ENCODE measurements at regions of chr10 and their contacts with region 1.

Region 1: GRCh38 chr10:114103284-114103683 is 59.6 kb downstream of the ADRB1 start:
- DNase-seq: peak in 4 of 5 donors; percentile 26 to 41 (median 33)
- H3K4me3 ChIP-seq: no peak overlapping the region
- H3K4me3 Mint-ChIP-seq: peak overlapping the region in 2 of 8 donors; percentile 38 to 48
- H3K27ac ChIP-seq: no peak overlapping the region
- H3K27ac Mint-ChIP-seq: no peak overlapping the region
- H3K4me1 ChIP-seq: peaks cover 15% of the 10 kb centered on the region
- H3K4me1 Mint-ChIP-seq: peaks cover 20 to 31% (median 23%) of the 10 kb centered on the region in 4 donors
- H3K27me3 ChIP-seq: peaks cover 12% of the 10 kb centered on the region
- H3K27me3 Mint-ChIP-seq: peaks cover 19 to 27% of the 10 kb centered on the region in 2 donors

Region 2: GRCh38 chr10:112663234-112664125 is 1439.8 kb before region 1 on chr10:
- CTCF ChIA-PET with region 1: no interaction called
- POLR2A ChIA-PET with region 1: no interaction called
- intact Hi-C with region 1: no loop called
- DNase-seq: no peak
- H3K4me3 ChIP-seq: no peak overlapping the region
- H3K4me3 Mint-ChIP-seq: no peak overlapping the region
- H3K27ac ChIP-seq: no peak overlapping the region
- H3K27ac Mint-ChIP-seq: no peak overlapping the region
- H3K4me1 ChIP-seq: no peaks in the 10 kb centered on the region
- H3K4me1 Mint-ChIP-seq: peaks cover 0 to 1% (median 0%) of the 10 kb centered on the region in 4 donors
- H3K27me3 ChIP-seq: no peaks in the 10 kb centered on the region
- H3K27me3 Mint-ChIP-seq: no peaks in the 10 kb centered on the region

Region 3: DNA sequence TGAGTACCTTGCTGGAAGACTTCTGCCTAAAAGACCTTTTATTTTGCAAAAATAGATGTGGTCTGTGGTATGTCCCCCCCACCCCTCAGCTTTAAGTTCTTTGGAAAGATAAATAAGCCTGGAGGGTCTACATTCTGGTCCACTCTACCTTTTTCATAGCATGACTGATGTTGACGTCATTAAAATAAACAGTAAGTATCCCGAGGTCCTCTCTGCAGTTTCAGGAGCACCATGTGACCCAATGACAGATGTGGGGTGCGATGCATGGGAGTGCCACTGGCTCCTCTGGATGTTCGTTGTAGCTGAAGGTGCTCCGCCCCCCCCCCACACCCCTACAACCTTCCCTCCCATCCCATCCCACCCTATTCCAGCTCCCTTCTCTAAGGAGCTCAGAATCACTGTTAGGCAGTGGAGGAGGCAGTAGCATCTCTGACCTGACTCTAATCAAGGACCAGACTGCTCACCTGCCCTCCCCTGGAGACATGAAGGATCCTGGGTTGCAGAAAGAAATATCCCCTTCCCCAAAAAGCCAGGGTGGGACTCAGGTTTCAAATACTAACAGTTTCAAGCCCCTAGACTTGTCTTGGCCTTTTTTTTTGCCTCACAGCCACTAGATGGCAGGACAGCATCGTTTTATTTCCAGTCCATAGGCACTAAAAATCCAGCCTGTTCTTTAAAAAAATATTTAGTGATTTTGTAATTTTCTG is 398.5 kb before region 1 on chr10:
- CTCF ChIA-PET with region 1: interaction called, 17 read pairs
- POLR2A ChIA-PET with region 1: no interaction called
- intact Hi-C with region 1: loop called (anchors 1 kb)
- DNase-seq: peak in 2 of 5 donors; percentile 13
- H3K4me3 ChIP-seq: no peak overlapping the region
- H3K4me3 Mint-ChIP-seq: no peak overlapping the region
- H3K27ac ChIP-seq: no peak overlapping the region
- H3K27ac Mint-ChIP-seq: no peak overlapping the region
- H3K4me1 ChIP-seq: peaks cover 24% of the 10 kb centered on the region
- H3K4me1 Mint-ChIP-seq: peaks cover 24 to 46% (median 28%) of the 10 kb centered on the region in 4 donors
- H3K27me3 ChIP-seq: no peaks in the 10 kb centered on the region
- H3K27me3 Mint-ChIP-seq: no peaks in the 10 kb centered on the region

Region 4: GRCh38 chr10:113802997-113803396 is 300.3 kb before region 1 on chr10:
- CTCF ChIA-PET with region 1: interaction called, 129 read pairs
- POLR2A ChIA-PET with region 1: no interaction called
- intact Hi-C with region 1: no loop called
- DNase-seq: no peak
- H3K4me3 ChIP-seq: no peak overlapping the region
- H3K4me3 Mint-ChIP-seq: no peak overlapping the region
- H3K27ac ChIP-seq: no peak overlapping the region
- H3K27ac Mint-ChIP-seq: no peak overlapping the region
- H3K4me1 ChIP-seq: no peaks in the 10 kb centered on the region
- H3K4me1 Mint-ChIP-seq: peaks cover 0 to 3% (median 1%) of the 10 kb centered on the region in 4 donors
- H3K27me3 ChIP-seq: peaks cover 6% of the 10 kb centered on the region
- H3K27me3 Mint-ChIP-seq: peaks cover 6 to 15% of the 10 kb centered on the region in 2 donors

Region 5: DNA sequence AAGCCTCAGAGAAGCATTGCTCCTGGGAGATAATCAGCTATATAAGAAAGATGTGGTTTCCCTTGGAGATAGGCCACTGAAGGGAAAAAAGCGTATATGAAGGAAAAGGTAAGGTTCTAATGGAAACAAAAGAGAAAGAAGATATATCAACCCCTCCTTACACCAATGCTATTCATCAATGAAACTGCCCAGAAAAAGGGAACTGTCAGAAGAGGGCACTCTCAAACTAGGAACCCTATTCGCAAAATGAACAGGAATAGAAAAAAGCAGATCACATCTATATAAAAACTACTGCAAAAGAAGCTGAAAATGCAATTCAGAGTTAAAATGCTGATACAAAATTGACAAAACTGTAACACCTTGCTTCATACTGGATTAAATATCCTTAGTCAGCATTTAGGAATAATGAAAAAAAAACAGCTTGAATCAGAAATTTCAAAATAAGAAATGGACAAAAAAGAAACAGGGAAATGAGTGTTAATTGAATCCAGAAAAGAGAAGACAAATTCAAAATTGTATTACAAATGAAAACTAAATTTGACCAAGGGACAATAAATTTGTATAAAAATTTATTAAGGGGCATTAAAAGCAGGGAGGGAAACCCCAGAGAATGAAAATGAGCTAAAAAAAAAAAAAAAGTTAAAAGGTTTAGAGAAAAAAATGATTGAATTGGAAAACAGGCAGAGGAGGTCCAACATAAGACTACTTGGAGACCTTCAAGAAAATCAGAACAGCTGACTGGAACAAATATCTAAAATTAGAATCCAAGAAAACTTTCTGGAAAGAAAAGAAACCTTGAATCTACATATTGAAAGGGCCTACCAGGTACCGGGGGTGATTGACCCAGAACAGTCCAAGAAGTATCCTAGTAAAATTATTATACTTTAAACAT is 230.9 kb before region 1 on chr10:
- CTCF ChIA-PET with region 1: interaction called, 3 read pairs
- POLR2A ChIA-PET with region 1: no interaction called
- intact Hi-C with region 1: loop called (anchors 5 kb)
- DNase-seq: no peak
- H3K4me3 ChIP-seq: no peak overlapping the region
- H3K4me3 Mint-ChIP-seq: no peak overlapping the region
- H3K27ac ChIP-seq: no peak overlapping the region
- H3K27ac Mint-ChIP-seq: no peak overlapping the region
- H3K4me1 ChIP-seq: no peaks in the 10 kb centered on the region
- H3K4me1 Mint-ChIP-seq: peaks cover 7 to 30% (median 15%) of the 10 kb centered on the region in 4 donors
- H3K27me3 ChIP-seq: no peaks in the 10 kb centered on the region
- H3K27me3 Mint-ChIP-seq: no peaks in the 10 kb centered on the region

Region 6: DNA sequence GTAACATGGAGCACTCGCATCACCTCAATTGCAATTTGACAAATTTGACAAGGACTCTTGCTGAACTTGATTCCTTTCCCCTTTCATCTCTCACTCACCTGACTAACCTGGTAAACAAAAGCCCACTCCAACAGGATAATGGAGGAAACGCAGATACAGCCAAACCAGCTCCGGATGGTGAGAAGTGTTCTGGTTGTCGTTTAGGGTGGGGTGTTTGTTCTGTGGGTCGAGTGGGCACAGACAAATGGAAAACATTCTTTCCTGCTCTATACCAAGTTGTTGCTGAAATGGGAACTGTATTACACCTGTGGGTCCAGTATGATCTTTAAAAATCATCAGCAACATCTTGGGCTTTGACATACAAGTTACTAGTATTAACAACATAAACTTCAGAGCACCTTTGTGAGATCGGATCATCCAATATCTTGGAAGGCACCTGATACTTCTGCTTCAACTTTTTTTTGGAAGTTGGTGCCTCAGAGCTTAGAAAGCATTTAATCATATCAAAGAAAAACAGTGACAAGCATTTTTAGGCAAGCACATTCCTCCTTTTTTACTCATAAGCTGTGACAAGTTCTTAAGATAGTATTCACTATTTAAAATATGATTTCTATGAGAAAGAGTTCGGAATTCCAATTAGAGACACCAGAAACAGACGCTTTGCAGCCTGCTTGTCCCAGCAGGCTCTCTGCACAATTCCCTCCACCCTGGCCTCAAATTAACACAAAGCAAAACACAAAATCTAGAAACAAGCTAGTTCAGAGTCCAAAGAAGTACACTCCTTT is 12.6 kb after region 1 on chr10:
- CTCF ChIA-PET with region 1: interaction called, 20 read pairs
- POLR2A ChIA-PET with region 1: no interaction called
- intact Hi-C with region 1: no loop called
- DNase-seq: no peak
- H3K4me3 ChIP-seq: no peak overlapping the region
- H3K4me3 Mint-ChIP-seq: no peak overlapping the region
- H3K27ac ChIP-seq: no peak overlapping the region
- H3K27ac Mint-ChIP-seq: no peak overlapping the region
- H3K4me1 ChIP-seq: no peaks in the 10 kb centered on the region
- H3K4me1 Mint-ChIP-seq: no peaks in the 10 kb centered on the region
- H3K27me3 ChIP-seq: no peaks in the 10 kb centered on the region
- H3K27me3 Mint-ChIP-seq: peaks cover 2 to 3% of the 10 kb centered on the region in 2 donors

Measured in CD4-positive, alpha-beta memory T cell (primary cell).